ENCODE measurements at regions of chr1 and their contacts with region 1.

Region 1: GRCh38 chr1:53878492-53879105 is 11.0 kb downstream of the YIPF1 start:
- DNase-seq: no peak
- H3K4me3 ChIP-seq: no peak overlapping the region
- H3K27ac ChIP-seq: no peak overlapping the region
- H3K4me1 ChIP-seq: no peaks in the 10 kb centered on the region
- H3K27me3 ChIP-seq: no peaks in the 10 kb centered on the region
- CTCF ChIP-seq: peak in 2 of 3 donors; percentile 35 to 43
- EP300 ChIP-seq: no peak
- POLR2A ChIP-seq: no peak

Region 2: DNA sequence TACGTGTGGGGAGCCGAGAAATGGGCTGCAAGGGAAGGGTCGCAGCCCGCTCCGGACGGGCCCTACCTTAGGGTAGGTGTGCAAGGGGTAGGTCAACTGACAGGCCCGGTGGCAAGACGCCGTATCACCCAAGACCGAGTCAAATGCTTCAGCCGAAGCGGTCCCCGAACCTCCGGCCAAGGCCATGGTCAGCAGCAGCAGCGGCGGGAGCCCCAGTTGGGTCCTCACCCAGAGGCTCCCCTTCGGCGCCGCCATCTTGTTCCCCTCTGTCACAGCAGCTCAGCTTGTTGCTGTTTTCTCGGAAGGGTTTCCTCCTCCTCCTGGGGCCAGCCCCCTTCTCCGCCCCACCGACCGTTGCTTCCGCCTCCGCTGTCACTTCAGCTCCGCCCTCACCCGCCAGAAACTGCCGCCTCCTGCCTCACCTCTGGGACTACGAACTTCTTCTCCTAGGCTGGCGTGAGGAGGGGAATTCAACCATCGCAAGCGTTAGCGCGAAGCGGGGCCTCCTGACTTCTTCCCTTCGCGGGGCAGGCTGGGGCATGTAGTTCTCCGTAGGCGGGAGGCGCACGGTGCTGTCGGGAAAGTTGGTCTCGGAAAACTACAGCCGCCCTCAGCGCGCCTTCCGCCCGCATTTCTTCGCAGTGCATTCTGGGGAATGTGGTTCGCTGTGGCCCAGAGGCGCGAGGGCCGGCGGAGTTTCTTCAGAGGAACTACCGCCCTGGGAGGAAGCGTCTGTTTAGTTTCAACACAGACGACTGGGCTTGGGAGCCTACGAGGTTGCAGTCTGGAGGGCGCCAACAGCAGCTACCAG is 174.5 kb after region 1 on chr1 and contains the starts of genes TCEANC2 and TMEM59:
- intact Hi-C with region 1: loop called in 1 of 4 experiments (anchors 10 kb)
- DNase-seq: peak; percentile 94 to 97 (median 95)
- H3K4me3 ChIP-seq: peak within 1 kb of the TSS; percentile 77
- H3K27ac ChIP-seq: peak within 1 kb of the TSS; percentile 82 to 84
- H3K4me1 ChIP-seq: peaks cover 4% of the 10 kb centered on the region
- H3K27me3 ChIP-seq: no peaks in the 10 kb centered on the region
- CTCF ChIP-seq: peak in 1 of 3 donors; percentile 5
- EP300 ChIP-seq: peak; percentile 18
- POLR2A ChIP-seq: peak; percentile 73
- total RNA-seq, gene TCEANC2: 1.8 to 4.7 (median 3.0) TPM
- total RNA-seq, gene TMEM59: 165 to 337 (median 268) TPM